Esophagus squamous epithelium (tissue), 5 donors: ENCODE measurements at regions of chr18 and their contacts with region 1.

Region 1: GRCh38 chr18:7177116-7177744 is 53.7 kb upstream of the LRRC30 start:
- DNase-seq: no peak
- H3K4me3 ChIP-seq: no peak overlapping the region
- H3K27ac ChIP-seq: no peak overlapping the region
- H3K4me1 ChIP-seq: no peaks in the 10 kb centered on the region
- H3K27me3 ChIP-seq: peaks cover 0 to 7% (median 0%) of the 10 kb centered on the region in 4 donors
- CTCF ChIP-seq: peak; percentile 13 to 74 (median 54)
- POLR2A ChIP-seq: no peak

Region 2: DNA sequence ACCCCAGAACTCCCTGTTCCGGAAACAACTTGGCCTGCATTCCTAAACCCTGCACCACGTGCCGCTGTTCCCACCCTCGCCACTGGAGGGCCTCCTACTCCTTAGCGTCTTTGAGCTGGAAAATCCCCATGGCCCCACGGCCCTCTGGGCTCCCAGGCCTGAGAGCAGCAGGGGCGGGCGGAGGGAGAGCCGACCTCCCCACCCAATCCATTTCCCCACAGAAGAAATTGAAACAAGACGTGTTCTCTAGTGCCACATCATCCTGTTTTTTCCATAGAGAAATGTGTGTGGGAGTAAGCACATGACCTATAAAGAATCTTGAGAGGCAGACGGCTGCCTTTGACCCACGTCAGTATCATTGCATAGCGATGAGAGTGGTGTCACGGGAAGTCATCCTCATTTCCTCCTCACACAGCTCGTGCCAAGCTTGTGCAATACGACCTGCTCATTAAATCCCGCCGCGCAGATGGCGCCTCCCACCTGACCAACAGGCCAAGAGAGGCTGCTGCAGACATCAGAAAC is 138.8 kb before region 1 on chr18:
- intact Hi-C with region 1: loop called (anchors 5 kb)
- DNase-seq: no peak
- H3K4me3 ChIP-seq: peak overlapping the region in 2 of 4 donors; percentile 1 to 39
- H3K27ac ChIP-seq: peak overlapping the region in 2 of 4 donors; percentile 26 to 78
- H3K4me1 ChIP-seq: no peaks in the 10 kb centered on the region
- H3K27me3 ChIP-seq: no peaks in the 10 kb centered on the region
- CTCF ChIP-seq: peak in 5 of 6 experiments; percentile 28 to 75 (median 54)
- POLR2A ChIP-seq: no peak